ENCODE measurements at regions of chr7 and their contacts with region 1.

Region 1: GRCh38 chr7:51162724-51163329 is 153.8 kb downstream of the COBL start:
- DNase-seq: peak; percentile 61
- H3K27ac ChIP-seq: no peak overlapping the region
- CTCF ChIP-seq: peak; percentile 92

Region 2: DNA sequence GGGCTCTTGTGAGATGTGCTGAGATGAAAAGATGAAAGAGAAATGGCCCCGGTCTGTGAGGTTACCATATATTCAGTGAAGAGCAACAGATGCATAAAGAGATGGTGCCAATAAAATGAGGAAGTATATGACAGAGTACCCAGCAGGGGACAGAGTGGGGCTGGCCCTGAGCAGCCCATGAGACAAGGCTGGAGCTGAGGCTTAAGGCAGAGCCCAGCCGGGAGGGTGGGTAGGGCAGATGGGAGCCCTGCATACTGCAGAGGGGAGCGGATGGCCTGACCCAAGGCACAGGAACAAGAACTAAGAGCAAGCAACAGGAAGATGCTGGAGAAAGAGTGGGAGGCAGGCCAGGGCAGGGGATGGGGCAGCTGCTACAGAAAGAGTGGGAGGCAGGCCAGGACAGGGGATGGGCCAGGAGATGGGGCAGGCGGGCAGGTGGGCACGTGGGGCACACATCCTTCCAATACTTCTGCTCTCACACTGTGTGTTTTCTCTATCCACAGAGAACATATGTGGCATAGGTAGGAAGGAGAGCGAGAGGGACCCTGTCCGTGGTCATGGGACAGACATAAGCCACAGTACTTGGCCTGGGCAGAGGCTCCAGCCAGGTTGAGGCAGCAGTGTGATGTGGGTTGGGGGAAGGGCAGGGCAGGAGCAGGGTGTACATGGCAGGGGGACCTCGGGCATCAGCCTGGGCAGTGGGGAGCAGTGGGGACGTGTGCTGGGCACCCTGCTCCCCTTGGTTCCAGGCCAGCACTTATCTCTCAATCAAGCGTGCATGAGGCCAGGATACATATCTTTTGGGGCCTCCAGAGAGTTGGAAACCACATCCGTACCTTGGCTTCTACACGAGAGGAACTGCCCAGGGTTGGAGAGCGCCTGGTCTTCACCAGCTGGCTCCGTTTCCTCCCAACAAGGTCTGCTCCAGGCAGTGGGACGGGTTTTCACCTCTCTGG is 949.9 kb before region 1 on chr7:
- CTCF ChIA-PET with region 1: no interaction called
- POLR2A ChIA-PET with region 1: no interaction called
- DNase-seq: no peak
- H3K27ac ChIP-seq: no peak overlapping the region
- CTCF ChIP-seq: no peak

Region 3: GRCh38 chr7:50502001-50502684 is 660.7 kb before region 1 on chr7:
- CTCF ChIA-PET with region 1: no interaction called
- POLR2A ChIA-PET with region 1: no interaction called
- DNase-seq: peak; percentile 75
- H3K27ac ChIP-seq: peak overlapping the region; percentile 89
- CTCF ChIP-seq: no peak

Region 4: GRCh38 chr7:50821457-50821979 is 341.3 kb before region 1 on chr7:
- CTCF ChIA-PET with region 1: no interaction called
- POLR2A ChIA-PET with region 1: no interaction called
- DNase-seq: no peak
- H3K27ac ChIP-seq: no peak overlapping the region
- CTCF ChIP-seq: no peak

Region 5: DNA sequence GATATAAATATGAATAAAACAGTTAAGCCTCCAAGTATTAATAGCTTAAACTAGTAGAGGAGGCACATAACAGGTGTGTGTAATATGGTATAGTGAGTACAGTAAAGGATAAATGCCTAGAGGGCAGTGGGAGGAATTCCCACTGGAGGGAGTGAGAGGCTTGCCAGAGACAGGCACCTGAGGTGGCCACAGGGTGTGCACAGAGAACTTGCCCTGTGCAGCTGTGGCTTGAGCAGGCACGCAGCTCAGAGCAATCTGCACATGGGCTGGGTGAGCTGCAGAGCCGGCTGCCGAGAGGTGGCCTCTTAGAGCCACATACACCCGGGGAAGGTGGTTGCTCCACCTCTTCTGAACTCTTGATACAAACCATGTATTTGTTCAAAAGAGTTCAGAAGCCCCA is 83.3 kb before region 1 on chr7:
- CTCF ChIA-PET with region 1: interaction called, 12 read pairs
- POLR2A ChIA-PET with region 1: no interaction called
- DNase-seq: peak; percentile 8
- H3K27ac ChIP-seq: no peak overlapping the region
- CTCF ChIP-seq: no peak; the same call in 1 of the 2 replicates

Region 6: DNA sequence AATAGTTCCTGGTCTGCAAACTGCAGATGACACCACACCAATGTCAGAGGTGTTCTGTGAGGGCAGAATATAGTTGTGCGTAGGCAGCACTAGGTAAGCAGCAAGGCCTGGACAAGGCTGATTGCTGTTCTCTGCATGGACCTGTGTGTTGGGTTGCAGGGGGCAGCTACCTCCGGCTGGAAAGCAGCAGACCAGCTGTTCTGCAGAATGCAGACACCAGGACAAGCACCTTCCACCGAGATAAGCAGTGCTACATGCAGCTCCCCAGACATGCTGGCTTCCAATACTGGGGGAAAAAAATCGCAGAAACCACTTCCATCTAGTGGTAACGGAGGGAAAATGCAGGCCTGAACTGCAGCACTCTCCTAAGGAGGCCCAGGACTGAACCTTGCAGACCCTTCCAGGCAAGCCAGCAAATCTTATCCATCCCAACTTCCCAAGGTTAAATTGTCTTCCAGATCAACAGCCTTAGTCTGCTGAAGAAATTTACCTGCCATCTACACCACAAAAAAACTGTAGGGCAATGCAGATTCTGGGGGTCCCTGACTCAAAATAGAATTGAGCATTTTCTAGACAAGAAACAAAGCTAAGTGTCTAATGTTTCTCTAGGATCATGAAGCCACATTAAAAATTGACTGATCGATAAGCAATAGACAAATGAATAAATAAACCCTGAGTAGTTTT is 204.2 kb after region 1 on chr7:
- CTCF ChIA-PET with region 1: interaction called, 64 read pairs
- POLR2A ChIA-PET with region 1: no interaction called
- DNase-seq: peak; percentile 81
- H3K27ac ChIP-seq: no peak overlapping the region
- CTCF ChIP-seq: peak; percentile 68

Region 7: GRCh38 chr7:51430480-51431086 is 267.8 kb after region 1 on chr7:
- CTCF ChIA-PET with region 1: interaction called, 19 read pairs
- POLR2A ChIA-PET with region 1: no interaction called
- DNase-seq: peak; percentile 89
- H3K27ac ChIP-seq: no peak overlapping the region
- CTCF ChIP-seq: peak; percentile 91

Measured in RWPE1 (cell line).